Naive thymus-derived CD4-positive, alpha-beta T cell (primary cell): ENCODE measurements at regions of chr19 and their contacts with region 1.

Region 1: DNA sequence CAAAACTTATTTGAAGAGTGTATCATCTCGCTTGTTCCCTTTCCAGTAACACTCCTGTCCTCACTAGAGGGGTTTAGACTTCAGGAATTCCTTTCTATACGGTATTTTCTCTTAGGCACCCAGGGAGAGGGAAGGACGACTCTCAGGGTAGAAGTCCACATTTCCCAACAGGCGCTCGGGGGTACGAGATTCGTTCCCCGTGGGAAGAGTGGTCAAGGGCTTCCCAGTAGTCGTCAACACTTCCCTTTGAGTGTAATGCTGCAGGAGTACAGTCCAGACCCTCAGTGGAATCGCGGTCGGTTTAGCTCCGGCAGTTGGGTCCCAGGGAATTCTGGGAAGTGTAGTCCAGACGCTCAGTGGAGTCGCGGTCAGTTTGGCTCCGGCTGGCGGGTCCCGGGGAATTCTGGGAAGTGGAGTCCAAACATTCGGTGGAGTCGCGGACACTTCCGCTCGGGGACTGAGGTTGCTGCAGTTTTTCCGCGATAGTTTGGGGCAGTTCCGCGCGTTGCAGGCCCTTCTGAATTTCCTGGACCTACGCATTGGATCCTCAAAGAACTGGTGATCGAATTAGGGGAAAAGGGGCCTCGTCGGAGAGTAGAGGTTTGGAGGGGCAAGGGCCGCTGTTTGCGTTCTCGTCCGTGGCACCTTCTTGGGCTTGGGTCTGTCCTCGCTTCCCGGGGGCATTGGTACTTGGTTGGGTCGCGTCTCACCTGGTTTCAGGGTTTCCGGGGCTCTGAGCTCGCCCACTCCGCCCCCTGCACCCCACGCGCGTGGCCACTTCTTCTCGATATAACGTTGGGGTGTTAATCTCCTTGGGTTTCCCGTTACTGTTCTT is at the start of gene ZNF224:
- DNase-seq: peak; percentile 43 to 79 (median 71)
- ATAC-seq: peak; percentile 94
- H3K4me3 ChIP-seq: peak within 1 kb of the TSS; percentile 84
- H3K4me3 Mint-ChIP-seq: peak within 1 kb of the TSS; percentile 82 to 99 (median 91)
- H3K27ac ChIP-seq: peak within 1 kb of the TSS; percentile 72
- H3K27ac Mint-ChIP-seq: peak within 1 kb of the TSS; percentile 58 to 96 (median 87)
- H3K4me1 ChIP-seq: peaks cover 10 to 13% of the 10 kb centered on the region in 2 donors
- H3K4me1 Mint-ChIP-seq: peaks cover 16 to 33% (median 25%) of the 10 kb centered on the region in 7 donors
- H3K27me3 ChIP-seq: no peaks in the 10 kb centered on the region
- H3K27me3 Mint-ChIP-seq: no peaks in the 10 kb centered on the region
- total RNA-seq, gene ZNF224: 35.0 to 82.0 (median 44.2) TPM

Region 2: GRCh38 chr19:43826787-43827754 is 267.1 kb before region 1 on chr19 and contains the start of gene ZNF283:
- CTCF ChIA-PET with region 1: no interaction called
- POLR2A ChIA-PET with region 1: no interaction called
- intact Hi-C with region 1: loop called in 1 of 2 experiments (anchors 2 kb)
- DNase-seq: peak; percentile 60 to 78 (median 74)
- ATAC-seq: peak; percentile 99
- H3K4me3 ChIP-seq: peak within 1 kb of the TSS; percentile 77
- H3K4me3 Mint-ChIP-seq: peak within 1 kb of the TSS; percentile 76 to 93 (median 90)
- H3K27ac ChIP-seq: peak within 1 kb of the TSS; percentile 66
- H3K27ac Mint-ChIP-seq: peak within 1 kb of the TSS; percentile 49 to 86 (median 77)
- H3K4me1 ChIP-seq: peaks cover 4 to 12% of the 10 kb centered on the region in 2 donors
- H3K4me1 Mint-ChIP-seq: peaks cover 16 to 25% (median 21%) of the 10 kb centered on the region in 7 donors
- H3K27me3 ChIP-seq: no peaks in the 10 kb centered on the region
- H3K27me3 Mint-ChIP-seq: peaks cover 1 to 16% (median 9%) of the 10 kb centered on the region in 5 donors
- total RNA-seq, gene ZNF283: 4.3 to 24.4 (median 7.7) TPM

Region 3: GRCh38 chr19:44002566-44003460 is 91.3 kb before region 1 on chr19 and contains the start of gene ZNF230:
- CTCF ChIA-PET with region 1: no interaction called
- POLR2A ChIA-PET with region 1: no interaction called
- intact Hi-C with region 1: loop called (anchors 1 kb)
- DNase-seq: peak; percentile 50 to 85 (median 77)
- ATAC-seq: peak; percentile 99
- H3K4me3 ChIP-seq: peak within 1 kb of the TSS; percentile 88
- H3K4me3 Mint-ChIP-seq: peak within 1 kb of the TSS; percentile 96 to 100 (median 99)
- H3K27ac ChIP-seq: peak within 1 kb of the TSS; percentile 80
- H3K27ac Mint-ChIP-seq: peak within 1 kb of the TSS; percentile 87 to 98 (median 95)
- H3K4me1 ChIP-seq: peaks cover 0 to 8% of the 10 kb centered on the region in 2 donors
- H3K4me1 Mint-ChIP-seq: peaks cover 15 to 32% (median 20%) of the 10 kb centered on the region in 7 donors
- H3K27me3 ChIP-seq: no peaks in the 10 kb centered on the region
- H3K27me3 Mint-ChIP-seq: peaks cover 0 to 2% (median 0%) of the 10 kb centered on the region in 5 donors
- total RNA-seq, gene ZNF230: 2.7 to 18.1 (median 6.7) TPM

Region 4: GRCh38 chr19:44032001-44032610 is 62.0 kb before region 1 on chr19:
- CTCF ChIA-PET with region 1: no interaction called
- POLR2A ChIA-PET with region 1: no interaction called
- intact Hi-C with region 1: no loop called
- DNase-seq: no peak
- ATAC-seq: no peak
- H3K4me3 ChIP-seq: no peak overlapping the region
- H3K4me3 Mint-ChIP-seq: no peak overlapping the region
- H3K27ac ChIP-seq: no peak overlapping the region
- H3K27ac Mint-ChIP-seq: no peak overlapping the region
- H3K4me1 ChIP-seq: no peaks in the 10 kb centered on the region
- H3K4me1 Mint-ChIP-seq: peaks cover 0 to 18% (median 9%) of the 10 kb centered on the region in 7 donors
- H3K27me3 ChIP-seq: no peaks in the 10 kb centered on the region
- H3K27me3 Mint-ChIP-seq: no peaks in the 10 kb centered on the region

Region 5: GRCh38 chr19:44071824-44072542 is 22.2 kb before region 1 on chr19 and contains the start of gene ZNF284:
- CTCF ChIA-PET with region 1: interaction called, 8 read pairs
- POLR2A ChIA-PET with region 1: interaction called, 3 read pairs
- intact Hi-C with region 1: loop called (anchors 1 kb)
- DNase-seq: peak; percentile 61 to 88 (median 84)
- ATAC-seq: peak; percentile 99
- H3K4me3 ChIP-seq: peak within 1 kb of the TSS; percentile 85
- H3K4me3 Mint-ChIP-seq: peak within 1 kb of the TSS; percentile 88 to 98 (median 92)
- H3K27ac ChIP-seq: peak within 1 kb of the TSS; percentile 63
- H3K27ac Mint-ChIP-seq: peak within 1 kb of the TSS; percentile 47 to 91 (median 75)
- H3K4me1 ChIP-seq: peaks cover 15 to 17% of the 10 kb centered on the region in 2 donors
- H3K4me1 Mint-ChIP-seq: peaks cover 20 to 40% (median 27%) of the 10 kb centered on the region in 7 donors
- H3K27me3 ChIP-seq: no peaks in the 10 kb centered on the region
- H3K27me3 Mint-ChIP-seq: no peaks in the 10 kb centered on the region
- total RNA-seq, gene ZNF284: 1.9 to 4.4 (median 2.4) TPM

Region 6: DNA sequence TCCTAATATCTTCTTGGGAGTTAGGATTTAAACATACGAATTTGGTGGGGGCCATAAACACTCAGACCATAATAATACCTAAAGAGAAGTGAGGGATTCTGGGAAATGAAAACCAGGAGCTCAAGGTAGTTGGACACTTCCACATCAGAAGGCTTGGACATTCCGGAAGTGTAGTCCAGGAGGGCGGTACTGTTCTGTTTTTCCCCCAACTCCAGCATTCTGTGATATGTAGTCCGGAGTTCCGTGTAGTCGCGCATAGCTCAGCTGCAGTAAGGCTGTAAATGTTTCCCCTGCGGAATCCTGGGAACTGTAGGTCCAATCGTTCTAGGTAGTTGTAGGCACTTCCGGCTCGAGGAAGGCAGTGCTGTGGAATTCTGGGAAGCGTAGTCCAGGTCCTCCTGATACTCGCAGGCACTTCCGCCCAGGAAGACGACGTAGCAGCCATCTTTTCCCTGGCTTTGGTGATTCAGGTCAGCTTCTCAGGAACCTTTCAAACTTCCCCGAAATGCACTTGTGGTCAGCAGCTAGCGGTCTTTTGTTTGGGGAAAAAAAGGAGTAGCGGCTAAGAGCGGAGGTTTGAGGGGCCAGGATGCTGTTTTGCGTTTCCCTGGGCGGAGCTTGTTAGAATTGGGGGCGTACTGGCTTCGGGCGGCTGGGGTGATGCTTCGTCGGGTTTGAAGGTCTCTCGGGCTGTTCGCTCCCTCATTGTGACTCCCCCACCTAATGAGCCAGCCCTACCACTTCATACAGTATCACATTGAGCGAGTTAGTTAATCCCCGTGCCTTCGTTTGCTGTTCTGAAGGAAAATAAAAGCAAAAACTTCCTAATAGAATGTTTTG is 70.7 kb after region 1 on chr19 and contains the start of gene ZNF226:
- CTCF ChIA-PET with region 1: interaction called, 3 read pairs
- POLR2A ChIA-PET with region 1: no interaction called
- intact Hi-C with region 1: loop called (anchors 1 kb)
- DNase-seq: peak; percentile 24 to 83 (median 75)
- ATAC-seq: peak; percentile 97
- H3K4me3 ChIP-seq: peak within 1 kb of the TSS; percentile 87
- H3K4me3 Mint-ChIP-seq: peak within 1 kb of the TSS; percentile 97 to 99 (median 98)
- H3K27ac ChIP-seq: peak within 1 kb of the TSS; percentile 78
- H3K27ac Mint-ChIP-seq: peak within 1 kb of the TSS; percentile 84 to 99 (median 97)
- H3K4me1 ChIP-seq: peaks cover 6 to 9% of the 10 kb centered on the region in 2 donors
- H3K4me1 Mint-ChIP-seq: peaks cover 10 to 40% (median 40%) of the 10 kb centered on the region in 7 donors
- H3K27me3 ChIP-seq: no peaks in the 10 kb centered on the region
- H3K27me3 Mint-ChIP-seq: no peaks in the 10 kb centered on the region
- total RNA-seq, gene ZNF226: 14.0 to 59.9 (median 20.3) TPM

Region 7: DNA sequence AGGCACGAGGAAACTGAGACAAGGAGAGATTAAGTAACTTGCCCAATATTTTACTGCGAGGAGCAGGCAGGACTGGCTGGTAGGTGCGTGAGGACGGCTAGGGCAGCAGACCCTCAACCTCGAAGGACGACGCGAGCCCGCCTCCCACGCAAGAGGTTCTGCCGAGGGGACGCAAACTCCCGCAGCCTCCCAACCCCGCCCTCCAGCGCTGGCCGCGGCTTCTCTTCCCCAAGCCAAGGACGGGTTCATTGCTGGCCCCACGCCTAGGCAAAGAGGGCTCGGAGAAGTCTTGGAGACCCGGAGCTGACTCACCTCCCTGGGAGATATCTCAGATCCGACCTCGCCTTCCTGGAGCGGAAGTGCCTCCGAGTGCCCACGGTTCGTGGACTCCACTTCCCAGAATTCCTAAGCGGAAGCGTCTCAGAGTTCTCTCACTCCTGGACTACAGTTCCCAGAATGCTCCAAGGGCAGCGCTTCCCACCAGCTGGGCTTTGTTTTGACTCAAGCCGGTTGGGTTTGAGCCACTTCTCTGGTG is 210.6 kb after region 1 on chr19 and contains the start of gene ZNF235:
- CTCF ChIA-PET with region 1: no interaction called
- POLR2A ChIA-PET with region 1: no interaction called
- intact Hi-C with region 1: loop called in 1 of 2 experiments (anchors 2 kb)
- DNase-seq: peak; percentile 17 to 77 (median 59)
- ATAC-seq: peak; percentile 97
- H3K4me3 ChIP-seq: peak within 1 kb of the TSS; percentile 84
- H3K4me3 Mint-ChIP-seq: peak within 1 kb of the TSS; percentile 88 to 96 (median 93)
- H3K27ac ChIP-seq: peak within 1 kb of the TSS; percentile 65
- H3K27ac Mint-ChIP-seq: peak within 1 kb of the TSS; percentile 20 to 82 (median 77)
- H3K4me1 ChIP-seq: peaks cover 10 to 12% of the 10 kb centered on the region in 2 donors
- H3K4me1 Mint-ChIP-seq: peaks cover 5 to 34% (median 27%) of the 10 kb centered on the region in 7 donors
- H3K27me3 ChIP-seq: no peaks in the 10 kb centered on the region
- H3K27me3 Mint-ChIP-seq: peaks cover 0 to 10% (median 0%) of the 10 kb centered on the region in 5 donors
- total RNA-seq, gene ZNF235: 5.5 to 14.3 (median 6.7) TPM